Aorta (tissue), 5 donors: ENCODE measurements at regions of chr5 and their contacts with region 1.

Region 1: DNA sequence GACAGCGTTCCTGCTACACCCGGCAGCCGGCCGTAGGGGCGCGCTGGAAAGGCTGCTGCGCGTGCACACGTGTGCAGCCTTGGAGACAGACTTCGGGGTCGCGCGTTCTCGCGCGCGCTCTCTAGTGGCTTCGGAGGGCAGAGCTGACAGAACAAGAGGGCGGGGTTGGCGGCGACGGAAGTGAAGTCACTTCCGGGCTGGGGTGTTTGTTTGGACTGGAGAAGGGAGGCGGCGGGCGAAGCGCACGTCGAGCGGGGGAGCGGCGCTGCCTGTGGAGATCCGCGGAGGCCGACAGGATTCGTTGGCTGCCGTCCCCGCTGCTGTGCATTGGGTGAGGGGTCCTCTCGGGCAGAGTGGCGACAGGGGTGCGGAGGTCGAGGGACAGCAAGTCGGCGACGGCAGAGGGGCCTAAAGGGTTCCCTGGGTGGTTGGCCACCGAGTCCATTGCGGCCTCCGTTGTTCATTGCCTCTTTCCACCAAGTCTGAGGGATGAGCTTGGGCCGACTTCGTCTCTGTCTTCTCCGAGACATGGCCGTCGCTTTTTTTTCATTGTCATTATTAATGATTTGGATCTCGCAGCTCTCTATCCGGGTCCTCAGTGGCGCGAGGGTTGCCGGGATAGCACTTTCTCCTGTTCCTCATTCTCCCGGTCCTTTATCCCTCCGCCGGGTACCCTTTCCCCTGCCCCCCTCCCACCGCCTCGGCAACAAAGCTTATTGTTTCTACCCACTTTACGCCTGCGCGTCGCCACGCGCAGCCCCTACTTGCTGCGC is at the start of gene PAIP2:
- DNase-seq: peak; percentile 99 to 100
- ATAC-seq: peak; percentile 99
- H3K4me3 ChIP-seq: peak within 1 kb of the TSS; percentile 60 to 67
- H3K27ac ChIP-seq: peak within 1 kb of the TSS; percentile 30 to 84
- H3K4me1 ChIP-seq: no peaks in the 10 kb centered on the region
- H3K27me3 ChIP-seq: no peaks in the 10 kb centered on the region
- total RNA-seq, gene PAIP2: 77.6 to 82.1 TPM

Region 2: GRCh38 chr5:138575194-138576015 is 766.4 kb before region 1 on chr5 and contains the start of gene HSPA9:
- intact Hi-C with region 1: loop called in 1 of 2 experiments (anchors 10 kb)
- DNase-seq: peak; percentile 98 to 99
- ATAC-seq: peak; percentile 98
- H3K4me3 ChIP-seq: peak within 1 kb of the TSS; percentile 93 to 97
- H3K27ac ChIP-seq: peak within 1 kb of the TSS; percentile 62 to 96
- H3K4me1 ChIP-seq: peaks cover 0 to 2% of the 10 kb centered on the region in 2 donors
- H3K27me3 ChIP-seq: no peaks in the 10 kb centered on the region
- total RNA-seq, gene HSPA9: 110 to 139 TPM

Region 3: GRCh38 chr5:139293504-139294373 is 48.1 kb before region 1 on chr5 and contains the start of gene MATR3:
- intact Hi-C with region 1: loop called (anchors 5 kb)
- DNase-seq: peak; percentile 98 to 99
- ATAC-seq: peak; percentile 98
- H3K4me3 ChIP-seq: peak within 1 kb of the TSS; percentile 54 to 87
- H3K27ac ChIP-seq: peak within 1 kb of the TSS; percentile 95 to 97
- H3K4me1 ChIP-seq: no peaks in the 10 kb centered on the region
- H3K27me3 ChIP-seq: no peaks in the 10 kb centered on the region
- total RNA-seq, gene MATR3: 183 to 194 TPM

Region 4: GRCh38 chr5:139403787-139404483 is 62.1 kb after region 1 on chr5 and contains the start of gene SPATA24:
- intact Hi-C with region 1: no loop called
- DNase-seq: peak; percentile 99
- ATAC-seq: peak; percentile 97
- H3K4me3 ChIP-seq: peak within 1 kb of the TSS; percentile 10 to 38
- H3K27ac ChIP-seq: peak within 1 kb of the TSS; percentile 32 to 82
- H3K4me1 ChIP-seq: no peaks in the 10 kb centered on the region
- H3K27me3 ChIP-seq: no peaks in the 10 kb centered on the region
- total RNA-seq, gene SPATA24: 2.2 to 3.1 TPM

Region 5: DNA sequence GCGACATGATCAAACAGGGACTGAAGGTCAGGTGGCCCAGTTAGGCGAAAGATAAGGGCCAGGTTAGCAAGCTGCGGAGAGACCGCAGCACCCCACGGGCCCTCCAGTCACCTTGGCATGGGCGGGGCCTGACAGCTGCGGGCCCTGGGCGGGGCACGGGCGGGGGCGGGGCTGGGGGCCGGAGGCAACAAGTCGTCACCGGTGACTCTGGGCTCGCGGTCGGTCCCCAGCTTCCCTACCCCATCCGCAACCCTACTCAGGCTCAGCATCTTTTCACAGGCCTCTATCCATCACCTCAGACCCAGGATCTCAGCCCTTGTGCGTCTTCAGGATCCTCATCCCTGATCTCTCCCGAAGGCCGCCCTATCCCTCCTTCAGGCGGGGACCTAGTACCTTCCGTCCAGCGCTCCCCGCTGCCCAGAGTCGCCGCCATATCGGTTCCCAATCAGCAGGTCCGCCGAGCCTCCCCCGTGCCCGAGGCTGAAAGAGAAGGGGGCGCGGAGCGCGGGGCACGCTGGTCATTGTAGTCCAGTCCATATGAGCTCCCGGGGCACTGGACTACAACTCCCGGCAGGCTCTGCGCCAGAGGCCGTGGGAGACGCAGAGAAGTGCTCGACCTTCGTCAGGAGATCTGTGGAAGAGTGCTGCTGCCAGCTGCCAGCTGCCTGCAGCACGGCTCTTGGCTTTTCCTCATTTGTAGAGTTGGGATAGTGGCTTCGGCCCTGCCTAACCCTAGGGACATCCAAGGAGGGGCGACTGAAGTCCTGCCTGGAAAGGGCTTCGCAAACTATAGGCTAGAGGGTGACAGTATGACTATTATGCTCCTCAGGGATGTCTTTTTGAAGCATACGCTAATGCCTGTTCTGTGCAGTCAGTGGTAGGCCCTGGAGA is 97.4 kb after region 1 on chr5 and contains the start of gene DNAJC18:
- intact Hi-C with region 1: no loop called
- DNase-seq: peak; percentile 97 to 99
- ATAC-seq: peak; percentile 97
- H3K4me3 ChIP-seq: peak within 1 kb of the TSS; percentile 64 to 85
- H3K27ac ChIP-seq: peak within 1 kb of the TSS; percentile 71 to 92
- H3K4me1 ChIP-seq: peaks cover 0 to 3% of the 10 kb centered on the region in 2 donors
- H3K27me3 ChIP-seq: no peaks in the 10 kb centered on the region
- total RNA-seq, gene DNAJC18: 18.5 to 26.4 TPM

Region 6: DNA sequence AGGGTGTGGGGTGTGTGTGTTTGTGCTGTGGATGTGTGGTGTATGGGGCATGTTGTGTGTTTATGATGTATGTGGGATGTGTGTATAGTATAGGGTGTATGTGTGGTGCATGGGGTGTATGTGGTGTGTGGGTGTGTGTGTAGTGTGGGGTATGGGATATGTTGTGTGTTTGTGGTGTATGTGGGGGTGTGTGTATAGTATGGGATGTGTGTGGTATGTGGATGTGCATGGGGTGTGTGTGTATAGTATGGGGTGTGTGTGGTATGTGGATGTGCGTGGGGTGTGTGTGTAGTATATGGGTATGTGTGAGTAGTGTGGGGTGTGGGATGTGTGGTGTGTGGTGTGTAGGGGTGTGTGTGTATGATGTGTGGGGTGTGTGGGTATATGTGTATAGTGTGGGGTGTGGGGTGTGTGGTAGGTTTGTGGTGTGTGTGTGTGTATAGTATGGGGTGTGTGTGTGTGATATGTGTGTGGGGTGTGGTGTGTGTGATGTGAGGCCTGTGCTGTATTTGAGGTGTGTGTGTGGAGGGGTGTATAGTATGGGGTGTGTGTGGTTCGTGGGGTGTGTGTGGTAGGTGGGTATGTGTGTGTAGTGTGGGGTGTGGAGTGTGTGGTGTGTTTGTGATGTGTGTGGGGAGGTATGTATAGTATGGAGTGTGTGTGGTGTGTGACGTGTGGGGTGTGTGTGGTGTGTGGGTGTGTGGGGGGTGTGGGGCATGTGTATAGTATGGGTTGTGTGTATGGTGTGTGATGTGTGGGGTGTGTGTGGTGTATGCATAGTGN is 110.2 kb after region 1 on chr5:
- intact Hi-C with region 1: no loop called
- DNase-seq: peak in 1 of 2 donors; percentile 32
- ATAC-seq: no peak
- H3K4me3 ChIP-seq: no peak overlapping the region
- H3K27ac ChIP-seq: no peak overlapping the region
- H3K4me1 ChIP-seq: no peaks in the 10 kb centered on the region
- H3K27me3 ChIP-seq: no peaks in the 10 kb centered on the region